Naive thymus-derived CD4-positive, alpha-beta T cell (primary cell): ENCODE measurements at regions of chr2 and their contacts with region 1.

Region 1: DNA sequence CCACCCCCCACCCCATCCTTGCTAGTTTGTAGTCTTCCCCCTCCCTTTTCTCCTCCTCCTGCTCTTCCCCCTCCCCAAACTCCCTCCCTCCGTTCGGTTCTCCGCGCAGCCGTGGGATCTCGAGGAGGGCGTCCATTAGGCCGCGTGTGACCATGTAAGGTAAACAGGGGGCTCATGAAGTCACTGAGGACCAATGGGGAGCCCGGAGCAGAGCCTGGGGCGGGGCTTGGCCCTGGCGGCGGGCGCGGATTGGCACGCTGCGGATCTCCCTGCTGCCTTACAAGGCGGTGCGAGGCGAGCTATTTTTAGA is 246 bp upstream of the KLF7 start:
- DNase-seq: peak; percentile 88 to 99 (median 98)
- ATAC-seq: peak; percentile 93
- H3K4me3 ChIP-seq: peak overlapping the region; percentile 89
- H3K4me3 Mint-ChIP-seq: peak overlapping the region; percentile 94 to 100 (median 98)
- H3K27ac ChIP-seq: peak overlapping the region; percentile 100
- H3K27ac Mint-ChIP-seq: peak overlapping the region; percentile 93 to 99 (median 97)
- H3K4me1 ChIP-seq: peaks cover 0 to 17% of the 10 kb centered on the region in 2 donors
- H3K4me1 Mint-ChIP-seq: peaks cover 32 to 48% (median 36%) of the 10 kb centered on the region in 7 donors
- H3K27me3 ChIP-seq: no peaks in the 10 kb centered on the region
- H3K27me3 Mint-ChIP-seq: peaks cover 0 to 2% (median 0%) of the 10 kb centered on the region in 5 donors

Region 2: GRCh38 chr2:206085742-206086445 is 1080.1 kb before region 1 on chr2 and contains the start of gene INO80D:
- CTCF ChIA-PET with region 1: no interaction called
- POLR2A ChIA-PET with region 1: interaction called, 6 read pairs
- intact Hi-C with region 1: loop called (anchors 5 to 10 kb)
- DNase-seq: peak; percentile 71 to 92 (median 90)
- ATAC-seq: peak; percentile 95
- H3K4me3 ChIP-seq: peak within 1 kb of the TSS; percentile 97
- H3K4me3 Mint-ChIP-seq: peak within 1 kb of the TSS; percentile 96 to 99 (median 98)
- H3K27ac ChIP-seq: peak within 1 kb of the TSS; percentile 97
- H3K27ac Mint-ChIP-seq: peak within 1 kb of the TSS; percentile 98 to 100 (median 100)
- H3K4me1 ChIP-seq: peaks cover 0 to 9% of the 10 kb centered on the region in 2 donors
- H3K4me1 Mint-ChIP-seq: peaks cover 25 to 61% (median 47%) of the 10 kb centered on the region in 7 donors
- H3K27me3 ChIP-seq: no peaks in the 10 kb centered on the region
- H3K27me3 Mint-ChIP-seq: no peaks in the 10 kb centered on the region
- total RNA-seq, gene INO80D: 30.7 to 50.9 (median 43.4) TPM

Region 3: DNA sequence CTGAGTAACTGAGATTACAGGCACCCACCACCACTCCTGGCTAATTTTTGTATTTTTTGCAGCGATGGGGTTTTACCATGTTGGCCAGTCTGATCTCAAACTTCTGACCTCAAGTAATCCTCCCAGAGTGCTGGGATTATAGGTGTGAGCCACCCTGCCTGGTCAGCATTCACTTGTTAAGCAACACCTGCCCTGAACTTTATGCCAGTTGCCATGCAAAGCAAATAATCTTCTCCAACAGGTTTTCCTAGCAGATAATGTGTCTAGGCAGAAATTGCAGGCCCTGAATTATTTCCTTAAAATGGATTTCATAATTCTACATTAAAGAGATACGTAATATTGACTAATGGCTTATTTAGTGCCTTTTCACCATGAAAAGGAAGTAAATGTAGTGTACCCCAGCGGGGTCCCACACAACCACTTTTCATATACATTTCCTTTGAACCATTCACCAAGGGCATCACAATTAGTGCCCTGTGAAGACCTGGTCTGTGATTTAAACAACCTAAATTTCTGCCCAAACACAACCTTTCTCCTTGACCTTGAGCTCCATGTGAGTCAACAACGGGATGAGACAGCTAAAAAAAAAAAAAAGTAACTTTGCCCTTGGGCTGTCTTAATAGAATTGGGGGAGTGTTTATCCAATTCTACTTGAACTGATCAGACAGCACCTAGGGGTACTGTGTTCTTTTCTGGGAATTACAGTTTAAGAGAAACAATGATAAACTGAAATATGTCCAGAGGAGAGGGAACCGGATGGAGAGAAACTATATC is 964.7 kb before region 1 on chr2:
- CTCF ChIA-PET with region 1: no interaction called
- POLR2A ChIA-PET with region 1: no interaction called
- intact Hi-C with region 1: no loop called
- DNase-seq: no peak
- ATAC-seq: no peak
- H3K4me3 ChIP-seq: no peak overlapping the region
- H3K4me3 Mint-ChIP-seq: no peak overlapping the region
- H3K27ac ChIP-seq: no peak overlapping the region
- H3K27ac Mint-ChIP-seq: no peak overlapping the region
- H3K4me1 ChIP-seq: no peaks in the 10 kb centered on the region
- H3K4me1 Mint-ChIP-seq: peaks cover 0 to 4% (median 0%) of the 10 kb centered on the region in 7 donors
- H3K27me3 ChIP-seq: no peaks in the 10 kb centered on the region
- H3K27me3 Mint-ChIP-seq: peaks cover 6 to 25% (median 17%) of the 10 kb centered on the region in 5 donors

Region 4: GRCh38 chr2:206488623-206489022 is 677.4 kb before region 1 on chr2:
- CTCF ChIA-PET with region 1: no interaction called
- POLR2A ChIA-PET with region 1: no interaction called
- intact Hi-C with region 1: no loop called
- DNase-seq: no peak
- ATAC-seq: peak; percentile 20
- H3K4me3 ChIP-seq: no peak overlapping the region
- H3K4me3 Mint-ChIP-seq: no peak overlapping the region
- H3K27ac ChIP-seq: no peak overlapping the region
- H3K27ac Mint-ChIP-seq: no peak overlapping the region
- H3K4me1 ChIP-seq: no peaks in the 10 kb centered on the region
- H3K4me1 Mint-ChIP-seq: peaks cover 0 to 3% (median 0%) of the 10 kb centered on the region in 7 donors
- H3K27me3 ChIP-seq: no peaks in the 10 kb centered on the region
- H3K27me3 Mint-ChIP-seq: peaks cover 8 to 46% (median 15%) of the 10 kb centered on the region in 5 donors

Region 5: GRCh38 chr2:206920951-206921350 is 245.0 kb before region 1 on chr2:
- CTCF ChIA-PET with region 1: no interaction called
- POLR2A ChIA-PET with region 1: no interaction called
- intact Hi-C with region 1: no loop called
- DNase-seq: no peak
- ATAC-seq: peak; percentile 48
- H3K4me3 ChIP-seq: no peak overlapping the region
- H3K4me3 Mint-ChIP-seq: no peak overlapping the region
- H3K27ac ChIP-seq: no peak overlapping the region
- H3K27ac Mint-ChIP-seq: no peak overlapping the region
- H3K4me1 ChIP-seq: no peaks in the 10 kb centered on the region
- H3K4me1 Mint-ChIP-seq: no peaks in the 10 kb centered on the region
- H3K27me3 ChIP-seq: no peaks in the 10 kb centered on the region
- H3K27me3 Mint-ChIP-seq: peaks cover 0 to 12% (median 6%) of the 10 kb centered on the region in 5 donors

Region 6: GRCh38 chr2:206981739-206982340 is 184.2 kb before region 1 on chr2:
- CTCF ChIA-PET with region 1: no interaction called
- POLR2A ChIA-PET with region 1: interaction called, 6 read pairs
- intact Hi-C with region 1: loop called in 1 of 2 experiments (anchors 5 kb)
- DNase-seq: peak; percentile 12 to 61 (median 39)
- ATAC-seq: peak; percentile 67
- H3K4me3 ChIP-seq: no peak overlapping the region
- H3K4me3 Mint-ChIP-seq: no peak overlapping the region
- H3K27ac ChIP-seq: no peak overlapping the region
- H3K27ac Mint-ChIP-seq: peak overlapping the region in 2 of 9 donors; percentile 46 to 63
- H3K4me1 ChIP-seq: peaks cover 0 to 7% of the 10 kb centered on the region in 2 donors
- H3K4me1 Mint-ChIP-seq: peaks cover 0 to 25% (median 11%) of the 10 kb centered on the region in 7 donors
- H3K27me3 ChIP-seq: no peaks in the 10 kb centered on the region
- H3K27me3 Mint-ChIP-seq: peaks cover 0 to 6% (median 0%) of the 10 kb centered on the region in 5 donors

Region 7: GRCh38 chr2:207121784-207122183 is 44.2 kb before region 1 on chr2:
- CTCF ChIA-PET with region 1: interaction called, 4 read pairs
- POLR2A ChIA-PET with region 1: interaction called, 23 read pairs
- intact Hi-C with region 1: loop called in 1 of 2 experiments (anchors 10 kb)
- DNase-seq: no peak
- ATAC-seq: no peak
- H3K4me3 ChIP-seq: no peak overlapping the region
- H3K4me3 Mint-ChIP-seq: no peak overlapping the region
- H3K27ac ChIP-seq: no peak overlapping the region
- H3K27ac Mint-ChIP-seq: no peak overlapping the region
- H3K4me1 ChIP-seq: peaks cover 0 to 6% of the 10 kb centered on the region in 2 donors
- H3K4me1 Mint-ChIP-seq: peaks cover 29 to 89% (median 55%) of the 10 kb centered on the region in 7 donors
- H3K27me3 ChIP-seq: no peaks in the 10 kb centered on the region
- H3K27me3 Mint-ChIP-seq: no peaks in the 10 kb centered on the region

Region 8: GRCh38 chr2:207176247-207176646 is 10.3 kb after region 1 on chr2:
- CTCF ChIA-PET with region 1: no interaction called
- POLR2A ChIA-PET with region 1: interaction called, 39 read pairs
- intact Hi-C with region 1: no loop called
- DNase-seq: no peak
- ATAC-seq: peak; percentile 71
- H3K4me3 ChIP-seq: no peak overlapping the region
- H3K4me3 Mint-ChIP-seq: no peak overlapping the region
- H3K27ac ChIP-seq: no peak overlapping the region
- H3K27ac Mint-ChIP-seq: no peak overlapping the region
- H3K4me1 ChIP-seq: no peaks in the 10 kb centered on the region
- H3K4me1 Mint-ChIP-seq: peaks cover 3 to 10% (median 4%) of the 10 kb centered on the region in 7 donors
- H3K27me3 ChIP-seq: no peaks in the 10 kb centered on the region
- H3K27me3 Mint-ChIP-seq: peaks cover 0 to 9% (median 0%) of the 10 kb centered on the region in 5 donors

Region 9: GRCh38 chr2:207529330-207530159 is 363.6 kb after region 1 on chr2 and contains the start of gene CREB1:
- CTCF ChIA-PET with region 1: no interaction called
- POLR2A ChIA-PET with region 1: interaction called, 27 read pairs
- intact Hi-C with region 1: loop called (anchors 1 kb)
- DNase-seq: peak; percentile 99 to 100 (median 100)
- ATAC-seq: peak; percentile 87
- H3K4me3 ChIP-seq: peak within 1 kb of the TSS; percentile 75
- H3K4me3 Mint-ChIP-seq: peak within 1 kb of the TSS; percentile 95 to 100 (median 99)
- H3K27ac ChIP-seq: peak within 1 kb of the TSS; percentile 100
- H3K27ac Mint-ChIP-seq: peak within 1 kb of the TSS; percentile 98 to 100 (median 100)
- H3K4me1 ChIP-seq: peaks cover 52 to 59% of the 10 kb centered on the region in 2 donors
- H3K4me1 Mint-ChIP-seq: peaks cover 45 to 85% (median 69%) of the 10 kb centered on the region in 7 donors
- H3K27me3 ChIP-seq: no peaks in the 10 kb centered on the region
- H3K27me3 Mint-ChIP-seq: peaks cover 0 to 7% (median 0%) of the 10 kb centered on the region in 5 donors
- total RNA-seq, gene CREB1: 89.7 to 141 (median 115) TPM

Region 10: GRCh38 chr2:207584952-207585351 is 419.0 kb after region 1 on chr2:
- CTCF ChIA-PET with region 1: no interaction called
- POLR2A ChIA-PET with region 1: no interaction called
- intact Hi-C with region 1: no loop called
- DNase-seq: no peak
- ATAC-seq: no peak
- H3K4me3 ChIP-seq: no peak overlapping the region
- H3K4me3 Mint-ChIP-seq: no peak overlapping the region
- H3K27ac ChIP-seq: no peak overlapping the region
- H3K27ac Mint-ChIP-seq: peak overlapping the region in 7 of 9 donors; percentile 27 to 71 (median 46)
- H3K4me1 ChIP-seq: no peaks in the 10 kb centered on the region
- H3K4me1 Mint-ChIP-seq: peaks cover 5 to 54% (median 18%) of the 10 kb centered on the region in 7 donors
- H3K27me3 ChIP-seq: no peaks in the 10 kb centered on the region
- H3K27me3 Mint-ChIP-seq: no peaks in the 10 kb centered on the region

Region 11: DNA sequence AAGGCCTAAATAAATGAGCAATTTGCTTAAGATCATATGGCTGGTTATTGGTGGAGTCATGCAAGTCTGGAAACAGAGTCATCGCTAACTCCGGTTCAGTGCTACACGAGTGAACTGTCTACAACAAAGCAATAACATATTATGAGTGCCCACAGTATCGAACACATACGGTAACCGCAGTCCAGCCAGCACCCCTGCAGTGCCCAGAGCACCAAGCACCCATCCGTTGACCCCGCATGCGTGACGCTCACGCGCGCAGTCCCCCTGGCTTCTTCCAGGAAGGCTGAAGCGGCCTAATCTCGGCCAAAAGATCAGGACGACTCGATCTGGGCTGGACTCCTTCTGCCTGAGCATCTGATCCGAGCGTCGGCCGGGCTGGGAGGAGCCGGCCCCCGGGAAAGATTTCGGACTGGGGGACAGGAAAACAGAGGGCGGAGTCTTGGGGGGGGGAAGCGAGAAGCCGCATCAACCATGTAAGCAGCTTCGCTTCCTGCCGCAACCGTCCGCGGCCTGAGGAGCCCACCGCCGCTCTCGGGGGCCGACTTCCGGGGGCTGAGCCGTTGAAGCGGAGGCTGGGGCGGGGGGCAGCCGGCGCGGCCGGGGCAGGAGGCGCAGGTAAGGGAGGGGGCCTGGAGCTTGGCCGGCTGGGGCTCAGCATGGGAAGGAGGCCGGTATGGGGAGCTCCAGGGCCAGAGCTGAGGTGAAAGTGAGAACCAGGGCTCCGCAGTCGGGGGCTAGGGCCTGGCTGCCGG is 1100.0 kb after region 1 on chr2 and contains the start of gene PIKFYVE:
- CTCF ChIA-PET with region 1: no interaction called
- POLR2A ChIA-PET with region 1: no interaction called
- intact Hi-C with region 1: loop called in 1 of 2 experiments (anchors 5 kb)
- DNase-seq: peak; percentile 63 to 87 (median 83)
- ATAC-seq: peak; percentile 94
- H3K4me3 ChIP-seq: peak within 1 kb of the TSS; percentile 97
- H3K4me3 Mint-ChIP-seq: peak within 1 kb of the TSS; percentile 90 to 99 (median 96)
- H3K27ac ChIP-seq: peak within 1 kb of the TSS; percentile 83
- H3K27ac Mint-ChIP-seq: peak within 1 kb of the TSS; percentile 87 to 98 (median 95)
- H3K4me1 ChIP-seq: peaks cover 12 to 16% of the 10 kb centered on the region in 2 donors
- H3K4me1 Mint-ChIP-seq: peaks cover 9 to 60% (median 53%) of the 10 kb centered on the region in 7 donors
- H3K27me3 ChIP-seq: no peaks in the 10 kb centered on the region
- H3K27me3 Mint-ChIP-seq: peaks cover 0 to 5% (median 0%) of the 10 kb centered on the region in 5 donors
- total RNA-seq, gene PIKFYVE: 33.4 to 52.3 (median 39.1) TPM